PC-3 (cell line): ENCODE measurements at regions of chr7 and their contacts with region 1.

Region 1: DNA sequence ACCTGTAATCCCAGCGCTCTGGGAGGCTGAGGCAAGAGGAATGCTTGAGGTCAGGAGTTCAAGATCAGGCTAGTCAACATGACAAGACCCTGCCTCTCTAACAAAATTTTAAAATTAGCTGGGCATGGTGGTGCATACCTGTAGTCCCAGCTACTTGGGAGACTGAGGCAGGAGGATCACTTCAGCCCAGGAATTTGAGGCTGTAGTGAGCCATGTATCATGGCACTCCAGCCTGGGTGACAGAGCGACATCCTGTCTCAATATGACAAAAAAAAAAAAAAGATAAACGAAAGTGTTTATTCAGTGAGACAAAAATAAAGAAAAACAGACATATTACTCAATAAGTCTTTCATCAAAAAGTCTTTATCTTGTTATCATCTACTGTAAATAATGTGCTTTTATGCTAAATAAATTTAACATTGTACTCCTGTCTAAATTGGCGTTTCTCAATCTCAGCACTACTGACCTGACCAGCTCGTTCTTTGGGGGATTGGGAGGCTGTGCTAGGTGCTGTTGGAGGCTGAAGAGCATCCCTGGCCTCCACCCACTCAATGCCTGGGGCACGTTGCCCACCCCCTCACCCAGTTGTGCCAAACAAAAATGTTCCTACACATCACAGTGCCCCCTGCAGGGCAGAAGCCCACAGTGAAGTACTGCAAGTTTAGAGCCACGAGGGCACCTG is 57.7 kb downstream of the NCAPG2 start:
- DNase-seq: peak; percentile 43
- ATAC-seq: no peak
- H3K4me3 ChIP-seq: no peak overlapping the region
- H3K27ac ChIP-seq: no peak overlapping the region
- H3K4me1 ChIP-seq: peaks cover 46% of the 10 kb centered on the region
- H3K27me3 ChIP-seq: no peaks in the 10 kb centered on the region
- CTCF ChIP-seq: peak; percentile 77

Region 2: DNA sequence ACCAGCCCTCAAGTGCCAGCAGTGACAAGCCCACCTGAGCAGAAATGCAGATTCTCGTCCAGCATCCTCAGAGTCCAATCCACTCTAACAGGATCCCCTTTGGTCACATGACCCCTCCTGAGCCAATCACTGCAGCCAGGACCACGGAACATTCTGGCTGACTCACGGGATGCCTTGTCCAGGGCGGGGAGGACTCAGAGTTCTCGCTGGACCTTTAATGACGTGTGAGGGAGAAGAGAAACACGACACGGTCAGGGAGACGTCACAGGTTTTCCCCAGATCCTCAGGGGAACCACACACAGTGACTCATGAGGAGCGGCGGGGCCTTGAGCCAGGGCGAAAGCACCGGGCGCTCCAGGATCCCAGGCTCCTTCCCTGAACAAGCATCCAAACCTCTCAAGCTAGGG is 215.0 kb before region 1 on chr7:
- CTCF ChIA-PET with region 1: no interaction called
- POLR2A ChIA-PET with region 1: no interaction called
- intact Hi-C with region 1: loop called (anchors 5 kb)
- DNase-seq: peak; percentile 90
- ATAC-seq: peak; percentile 78
- H3K4me3 ChIP-seq: peak overlapping the region; percentile 52
- H3K27ac ChIP-seq: peak overlapping the region; percentile 99
- H3K4me1 ChIP-seq: peaks cover 19% of the 10 kb centered on the region
- H3K27me3 ChIP-seq: peaks cover 13% of the 10 kb centered on the region; the same call in 1 of the 2 replicates
- CTCF ChIP-seq: no peak

Region 3: DNA sequence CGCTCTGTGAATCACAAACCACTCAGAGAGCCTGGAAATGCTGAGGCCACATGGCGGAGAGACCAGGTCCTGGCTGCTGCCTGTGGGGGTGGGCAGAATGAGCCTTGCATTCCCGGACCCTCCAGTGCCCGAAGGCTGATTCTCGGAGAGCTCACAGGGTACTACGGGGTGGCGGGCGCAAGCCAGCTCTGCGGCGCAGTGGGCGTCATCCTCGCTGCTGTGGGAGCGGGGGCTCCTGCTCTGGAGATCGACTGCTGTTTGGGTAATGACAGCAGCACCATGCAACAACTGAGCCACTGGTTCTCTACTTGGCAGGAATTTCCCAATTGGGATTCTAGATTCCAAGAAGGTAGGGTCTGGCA is 167.3 kb before region 1 on chr7:
- CTCF ChIA-PET with region 1: no interaction called
- POLR2A ChIA-PET with region 1: no interaction called
- intact Hi-C with region 1: loop called (anchors 5 kb)
- DNase-seq: no peak
- ATAC-seq: no peak
- H3K4me3 ChIP-seq: no peak overlapping the region
- H3K27ac ChIP-seq: no peak overlapping the region
- H3K4me1 ChIP-seq: peaks cover 19% of the 10 kb centered on the region
- H3K27me3 ChIP-seq: peaks cover 23% of the 10 kb centered on the region
- CTCF ChIP-seq: no peak

Region 4: GRCh38 chr7:158581440-158582088 is 65.3 kb before region 1 on chr7:
- CTCF ChIA-PET with region 1: no interaction called
- POLR2A ChIA-PET with region 1: no interaction called
- intact Hi-C with region 1: loop called (anchors 2 kb)
- DNase-seq: peak; percentile 56
- ATAC-seq: peak; percentile 83
- H3K4me3 ChIP-seq: no peak overlapping the region
- H3K27ac ChIP-seq: no peak overlapping the region
- H3K4me1 ChIP-seq: peaks cover 8% of the 10 kb centered on the region; the same call in 1 of the 2 replicates
- H3K27me3 ChIP-seq: peaks cover 29% of the 10 kb centered on the region; the same call in 1 of the 2 replicates
- CTCF ChIP-seq: no peak

Region 5: GRCh38 chr7:158658475-158658874 is 11.6 kb after region 1 on chr7:
- CTCF ChIA-PET with region 1: interaction called, 5 read pairs
- POLR2A ChIA-PET with region 1: no interaction called
- intact Hi-C with region 1: loop called (anchors 1 kb)
- DNase-seq: no peak
- ATAC-seq: peak; percentile 58
- H3K4me3 ChIP-seq: no peak overlapping the region
- H3K27ac ChIP-seq: no peak overlapping the region
- H3K4me1 ChIP-seq: no peaks in the 10 kb centered on the region
- H3K27me3 ChIP-seq: no peaks in the 10 kb centered on the region
- CTCF ChIP-seq: no peak

Region 6: GRCh38 chr7:158740013-158740656 is 93.2 kb after region 1 on chr7:
- CTCF ChIA-PET with region 1: no interaction called
- POLR2A ChIA-PET with region 1: no interaction called
- intact Hi-C with region 1: loop called (anchors 1 kb)
- DNase-seq: peak; percentile 81
- ATAC-seq: peak; percentile 80
- H3K4me3 ChIP-seq: peak overlapping the region; percentile 40
- H3K27ac ChIP-seq: peak overlapping the region; percentile 94
- H3K4me1 ChIP-seq: peaks cover 31% of the 10 kb centered on the region
- H3K27me3 ChIP-seq: no peaks in the 10 kb centered on the region
- CTCF ChIP-seq: no peak

Region 7: DNA sequence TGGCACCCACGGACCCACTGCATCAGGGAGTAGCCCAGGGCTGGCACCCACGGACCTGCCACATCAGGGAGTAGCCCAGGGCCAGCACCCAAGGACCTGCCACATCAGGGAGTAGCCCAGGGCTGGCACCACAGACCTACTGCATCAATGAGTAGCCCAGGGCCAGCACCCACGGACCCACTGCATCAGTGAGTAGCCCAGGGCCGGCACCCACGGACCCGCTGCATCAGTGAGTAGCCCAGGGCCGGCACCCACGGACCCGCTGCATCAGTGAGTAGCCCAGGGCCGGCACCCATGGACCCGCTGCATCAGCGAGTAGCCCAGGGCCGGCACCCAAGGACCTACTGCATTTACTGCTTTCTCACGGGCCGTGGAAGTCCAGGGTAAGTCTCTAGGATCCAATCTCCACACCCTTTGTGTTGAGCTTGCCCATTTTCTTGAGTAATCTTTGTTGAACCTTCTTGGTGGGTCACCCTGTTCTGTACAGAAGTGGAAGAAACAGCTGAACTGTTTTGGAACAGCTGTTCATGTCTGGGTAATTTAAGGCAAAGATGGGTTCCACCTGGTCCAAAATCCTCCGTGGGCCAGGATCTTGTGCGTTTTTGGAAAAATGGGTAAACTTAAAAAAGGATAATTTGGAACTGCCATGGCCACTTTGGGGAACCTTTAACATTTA is 428.8 kb after region 1 on chr7:
- CTCF ChIA-PET with region 1: no interaction called
- POLR2A ChIA-PET with region 1: no interaction called
- intact Hi-C with region 1: no loop called
- DNase-seq: no peak
- ATAC-seq: no peak
- H3K4me3 ChIP-seq: no peak overlapping the region
- H3K27ac ChIP-seq: no peak overlapping the region
- H3K4me1 ChIP-seq: peaks cover 3% of the 10 kb centered on the region; the same call in 1 of the 2 replicates
- H3K27me3 ChIP-seq: peaks cover 32% of the 10 kb centered on the region
- CTCF ChIP-seq: no peak